A549 (cell line): ENCODE measurements at regions of chr14 and their contacts with region 1.

Region 1: DNA sequence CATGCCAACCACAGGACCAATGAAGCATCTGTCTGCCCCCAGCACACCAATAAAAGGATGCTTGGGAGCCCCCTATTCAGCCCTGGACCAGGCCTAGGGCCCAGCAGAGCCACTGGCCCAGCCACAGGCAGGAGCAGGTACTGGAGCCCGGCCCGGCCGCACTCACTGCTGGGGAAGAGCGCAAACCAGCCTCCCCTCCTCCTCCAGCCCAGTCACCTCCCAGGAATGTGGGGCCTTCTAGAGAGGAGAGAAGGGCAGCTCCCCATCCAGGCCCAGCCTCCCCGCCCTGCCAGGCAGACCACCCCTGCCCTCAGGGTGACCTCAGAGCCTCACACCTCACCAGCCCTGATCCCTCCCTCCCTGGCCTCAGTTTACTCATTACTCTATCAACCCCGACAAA is 56.2 kb downstream of the CCNK start:
- DNase-seq: peak; percentile 48 to 74
- ATAC-seq: peak; percentile 84 to 90
- H3K4me3 ChIP-seq: no peak overlapping the region
- H3K27ac ChIP-seq: peak overlapping the region; percentile 69 to 92
- H3K4me1 ChIP-seq: peaks cover 58% of the 10 kb centered on the region
- CTCF ChIP-seq: no peak
- EP300 ChIP-seq: no peak
- POLR2A ChIP-seq: no peak
- RAD21 ChIP-seq: no peak

Region 2: DNA sequence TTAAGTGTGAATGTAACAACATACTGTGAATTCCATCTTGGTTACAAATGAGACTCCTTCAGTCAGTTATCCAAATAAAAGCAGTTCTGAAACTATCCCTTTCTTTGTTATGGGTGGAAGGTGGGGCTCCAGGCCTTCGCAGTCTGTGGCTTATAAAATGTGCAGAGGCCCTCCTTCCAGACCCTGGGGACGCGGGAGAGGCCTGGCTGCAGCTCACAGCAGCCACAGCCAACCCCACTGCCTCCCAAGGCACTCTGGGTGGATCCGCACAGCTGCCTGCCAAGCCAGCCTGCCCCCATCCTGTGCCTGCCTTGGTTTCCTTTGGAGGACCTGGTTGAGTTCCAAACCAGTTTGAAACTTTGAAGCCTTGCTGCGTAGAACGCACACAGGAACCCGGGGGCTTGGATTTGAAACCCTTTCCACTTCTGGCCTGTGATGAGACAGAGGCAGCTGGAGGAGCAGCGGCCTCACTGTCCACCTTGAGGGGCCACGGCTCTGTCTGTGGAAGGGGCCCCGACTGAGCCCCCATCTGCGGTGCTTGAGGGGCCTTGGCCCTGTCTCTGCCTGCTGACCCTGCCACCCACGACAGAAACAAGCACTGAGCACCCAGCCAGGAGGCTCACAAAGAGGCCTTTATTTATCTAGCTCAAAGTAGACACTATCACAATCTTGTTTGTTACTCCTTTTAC is 25.8 kb before region 1 on chr14:
- CTCF ChIA-PET with region 1: no interaction called
- POLR2A ChIA-PET with region 1: no interaction called
- DNase-seq: no peak
- ATAC-seq: no peak
- H3K4me3 ChIP-seq: no peak overlapping the region
- H3K27ac ChIP-seq: no peak overlapping the region
- H3K4me1 ChIP-seq: no peaks in the 10 kb centered on the region
- CTCF ChIP-seq: no peak
- EP300 ChIP-seq: no peak
- POLR2A ChIP-seq: no peak
- RAD21 ChIP-seq: no peak

Region 3: GRCh38 chr14:99563233-99564129 is 26.1 kb after region 1 on chr14:
- CTCF ChIA-PET with region 1: interaction called, 18 read pairs
- POLR2A ChIA-PET with region 1: no interaction called
- DNase-seq: peak; percentile 76 to 86
- ATAC-seq: peak; percentile 93 to 98
- H3K4me3 ChIP-seq: no peak overlapping the region
- H3K27ac ChIP-seq: peak overlapping the region; percentile 37 to 92; a peak in 4 of 6 replicates
- H3K4me1 ChIP-seq: peaks cover 72% of the 10 kb centered on the region
- CTCF ChIP-seq: peak; percentile 67
- EP300 ChIP-seq: no peak
- POLR2A ChIP-seq: no peak
- RAD21 ChIP-seq: peak; percentile 74 to 81